ENCODE measurements at regions of chr4 and their contacts with region 1.

Region 1: GRCh38 chr4:25439918-25440477 is 62.9 kb downstream of the ANAPC4 start:
- DNase-seq: peak; percentile 64
- ATAC-seq: peak; percentile 83

Region 2: GRCh38 chr4:25123236-25123635 is 316.8 kb before region 1 on chr4:
- intact Hi-C with region 1: no loop called
- DNase-seq: no peak
- ATAC-seq: no peak

Region 3: GRCh38 chr4:25749150-25749794 is 309.3 kb after region 1 on chr4:
- intact Hi-C with region 1: no loop called
- DNase-seq: no peak
- ATAC-seq: no peak

Region 4: DNA sequence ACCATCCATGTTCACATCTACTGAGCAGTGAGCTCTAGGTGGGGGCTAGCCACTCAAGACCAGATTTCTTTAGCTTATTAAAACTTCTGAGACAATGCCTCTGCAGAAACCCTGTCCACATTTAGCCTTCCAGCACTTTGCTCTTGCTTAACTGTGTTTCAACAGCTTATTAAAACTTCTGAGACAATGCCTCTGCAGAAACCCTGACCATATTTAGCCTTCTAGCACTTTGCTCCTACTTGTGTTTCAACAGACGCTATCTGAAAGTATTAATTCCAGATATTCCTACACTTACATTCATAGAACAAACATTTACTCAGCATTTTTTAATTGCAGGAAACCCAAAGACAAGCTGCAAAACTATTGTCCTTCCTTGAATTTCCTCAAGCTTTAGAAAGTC is 330.8 kb after region 1 on chr4:
- intact Hi-C with region 1: loop called (anchors 5 kb)
- DNase-seq: no peak
- ATAC-seq: no peak